Motor neuron (in vitro differentiated cells): ENCODE measurements at regions of chr12 and their contacts with region 1.

Region 1: GRCh38 chr12:71415336-71416231 is 24.0 kb upstream of the LGR5 start:
- ATAC-seq: peak in 7 of 8 experiments; percentile 49 to 91 (median 78)
- H3K4me3 ChIP-seq: no peak overlapping the region
- H3K27ac ChIP-seq: no peak overlapping the region
- H3K4me1 ChIP-seq: no peaks in the 10 kb centered on the region

Region 2: DNA sequence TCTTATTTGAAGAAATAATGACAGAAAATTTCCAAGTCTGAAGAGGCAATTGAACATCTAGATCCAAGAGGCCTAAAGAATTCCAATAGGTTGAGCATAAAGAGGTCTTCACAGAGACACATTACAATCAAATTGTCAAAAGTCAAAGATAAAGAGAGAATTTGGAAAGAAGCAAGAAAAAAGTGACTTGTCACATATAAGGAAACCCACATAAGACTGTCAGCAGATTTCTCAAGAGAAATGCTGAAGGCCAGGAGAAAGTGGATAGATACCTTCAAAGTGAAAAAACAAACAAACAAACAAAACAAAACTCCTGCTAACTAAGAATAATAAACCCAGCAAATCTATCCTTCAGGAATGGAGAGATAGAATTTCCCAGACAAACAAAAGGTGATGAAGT is 94.1 kb before region 1 on chr12:
- in situ Hi-C with region 1: no loop called
- ATAC-seq: no peak
- H3K4me3 ChIP-seq: no peak overlapping the region
- H3K27ac ChIP-seq: no peak overlapping the region
- H3K4me1 ChIP-seq: no peaks in the 10 kb centered on the region

Region 3: GRCh38 chr12:71551529-71551928 is 135.9 kb after region 1 on chr12:
- in situ Hi-C with region 1: loop called in 1 of 9 experiments (anchors 25 kb)
- ATAC-seq: no peak
- H3K4me3 ChIP-seq: no peak overlapping the region
- H3K27ac ChIP-seq: no peak overlapping the region
- H3K4me1 ChIP-seq: no peaks in the 10 kb centered on the region

Region 4: GRCh38 chr12:71710276-71711125 is 294.9 kb after region 1 on chr12:
- in situ Hi-C with region 1: loop called in 1 of 9 experiments (anchors 25 kb)
- ATAC-seq: peak in 5 of 8 experiments; percentile 33 to 89 (median 87)
- H3K4me3 ChIP-seq: no peak overlapping the region
- H3K27ac ChIP-seq: no peak overlapping the region
- H3K4me1 ChIP-seq: no peaks in the 10 kb centered on the region

Region 5: GRCh38 chr12:71746983-71747611 is 331.5 kb after region 1 on chr12:
- in situ Hi-C with region 1: loop called in 2 of 9 experiments (anchors 25 kb)
- ATAC-seq: peak; percentile 47 to 92 (median 72)
- H3K4me3 ChIP-seq: no peak overlapping the region
- H3K27ac ChIP-seq: no peak overlapping the region
- H3K4me1 ChIP-seq: no peaks in the 10 kb centered on the region

Region 6: DNA sequence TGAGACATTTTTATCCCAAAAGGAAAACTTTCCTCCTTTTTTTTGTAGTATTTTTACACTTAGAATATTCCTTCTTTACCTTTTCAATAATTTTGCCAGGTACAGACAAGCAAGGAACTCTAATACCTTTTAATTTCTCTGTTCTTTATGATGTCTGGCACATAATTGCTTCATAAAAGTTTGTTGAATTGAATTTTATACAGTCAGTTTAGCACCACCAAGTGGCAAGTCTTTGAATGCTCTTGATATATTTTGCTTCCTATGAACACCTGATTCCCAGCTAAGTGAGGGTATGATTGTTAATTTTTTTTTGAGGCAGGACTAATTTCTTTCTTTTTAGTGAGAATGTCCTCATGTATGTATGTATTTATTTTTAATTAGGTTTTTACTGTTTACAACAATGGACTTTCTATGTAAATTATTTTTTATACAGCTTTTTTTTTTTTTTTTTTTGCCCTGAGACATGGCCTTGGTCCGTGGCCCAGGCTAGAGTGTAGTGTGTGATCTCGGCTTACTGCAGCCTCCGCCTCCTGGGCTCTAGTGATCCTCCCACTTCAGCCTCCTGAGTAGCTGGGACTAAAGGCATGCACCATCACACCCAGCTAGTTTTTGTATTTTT is 430.8 kb after region 1 on chr12:
- in situ Hi-C with region 1: no loop called
- ATAC-seq: peak in 3 of 8 experiments; percentile 35 to 55 (median 39)
- H3K4me3 ChIP-seq: no peak overlapping the region
- H3K27ac ChIP-seq: no peak overlapping the region
- H3K4me1 ChIP-seq: no peaks in the 10 kb centered on the region